B cell (primary cell): ENCODE measurements at regions of chr19 and their contacts with region 1.

Region 1: DNA sequence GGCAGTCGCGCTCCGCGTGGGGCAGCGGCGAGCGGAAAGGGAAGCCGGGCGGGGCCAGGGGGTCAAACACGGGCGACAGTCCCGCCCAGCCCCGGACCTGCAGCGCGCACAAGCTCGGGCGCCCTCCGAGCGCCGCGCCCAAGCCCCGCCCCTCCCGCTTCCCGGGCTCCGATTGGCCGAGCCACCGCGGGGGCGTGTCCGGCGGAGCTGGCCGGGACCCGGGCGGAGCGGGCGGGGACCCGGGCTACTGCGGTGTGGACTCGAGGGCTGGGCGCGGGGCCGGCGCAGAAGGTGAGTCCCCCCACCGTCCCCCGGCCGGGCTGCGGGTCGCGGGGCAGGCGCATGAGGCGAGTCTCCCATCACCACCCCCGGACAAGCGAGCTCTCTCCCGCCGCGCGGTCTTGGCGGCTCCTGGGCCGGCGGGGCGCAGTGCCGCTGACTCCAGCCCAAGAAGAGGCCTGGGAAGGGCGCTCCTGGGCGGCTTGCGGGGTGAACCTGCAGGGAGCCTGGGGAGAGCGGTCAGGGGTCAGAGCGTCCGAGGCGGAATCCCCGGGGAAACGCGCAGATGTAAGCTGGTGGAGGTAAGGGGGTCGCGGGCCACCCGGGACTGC is at the start of gene PLEKHF1:
- DNase-seq: peak; percentile 87
- ATAC-seq: peak; percentile 97
- H3K4me3 ChIP-seq: peak within 1 kb of the TSS; percentile 18 to 87 (median 75)
- H3K4me3 Mint-ChIP-seq: peak within 1 kb of the TSS; percentile 87
- H3K27ac ChIP-seq: peak within 1 kb of the TSS; percentile 18 to 79
- H3K27ac Mint-ChIP-seq: peak within 1 kb of the TSS; percentile 80
- H3K4me1 ChIP-seq: peaks cover 31 to 42% of the 10 kb centered on the region in 2 donors
- H3K4me1 Mint-ChIP-seq: peaks cover 32% of the 10 kb centered on the region
- H3K27me3 ChIP-seq: no peaks in the 10 kb centered on the region
- H3K27me3 Mint-ChIP-seq: no peaks in the 10 kb centered on the region
- CTCF ChIP-seq: no peak
- total RNA-seq, gene PLEKHF1: 5.5 and 6.4 TPM in 2 replicates

Region 2: GRCh38 chr19:29680447-29680846 is 15.1 kb after region 1 on chr19:
- CTCF ChIA-PET with region 1: interaction called, 5 read pairs
- POLR2A ChIA-PET with region 1: no interaction called
- intact Hi-C with region 1: loop called (anchors 2 kb)
- DNase-seq: peak; percentile 76
- ATAC-seq: peak; percentile 90
- H3K4me3 ChIP-seq: peak overlapping the region in 2 of 5 experiments; percentile 9 to 15
- H3K4me3 Mint-ChIP-seq: peak overlapping the region; percentile 70
- H3K27ac ChIP-seq: peak overlapping the region; percentile 56 to 63
- H3K27ac Mint-ChIP-seq: peak overlapping the region; percentile 79
- H3K4me1 ChIP-seq: peaks cover 30 to 45% of the 10 kb centered on the region in 2 donors
- H3K4me1 Mint-ChIP-seq: peaks cover 33% of the 10 kb centered on the region
- H3K27me3 ChIP-seq: no peaks in the 10 kb centered on the region
- H3K27me3 Mint-ChIP-seq: no peaks in the 10 kb centered on the region
- CTCF ChIP-seq: no peak

Region 3: DNA sequence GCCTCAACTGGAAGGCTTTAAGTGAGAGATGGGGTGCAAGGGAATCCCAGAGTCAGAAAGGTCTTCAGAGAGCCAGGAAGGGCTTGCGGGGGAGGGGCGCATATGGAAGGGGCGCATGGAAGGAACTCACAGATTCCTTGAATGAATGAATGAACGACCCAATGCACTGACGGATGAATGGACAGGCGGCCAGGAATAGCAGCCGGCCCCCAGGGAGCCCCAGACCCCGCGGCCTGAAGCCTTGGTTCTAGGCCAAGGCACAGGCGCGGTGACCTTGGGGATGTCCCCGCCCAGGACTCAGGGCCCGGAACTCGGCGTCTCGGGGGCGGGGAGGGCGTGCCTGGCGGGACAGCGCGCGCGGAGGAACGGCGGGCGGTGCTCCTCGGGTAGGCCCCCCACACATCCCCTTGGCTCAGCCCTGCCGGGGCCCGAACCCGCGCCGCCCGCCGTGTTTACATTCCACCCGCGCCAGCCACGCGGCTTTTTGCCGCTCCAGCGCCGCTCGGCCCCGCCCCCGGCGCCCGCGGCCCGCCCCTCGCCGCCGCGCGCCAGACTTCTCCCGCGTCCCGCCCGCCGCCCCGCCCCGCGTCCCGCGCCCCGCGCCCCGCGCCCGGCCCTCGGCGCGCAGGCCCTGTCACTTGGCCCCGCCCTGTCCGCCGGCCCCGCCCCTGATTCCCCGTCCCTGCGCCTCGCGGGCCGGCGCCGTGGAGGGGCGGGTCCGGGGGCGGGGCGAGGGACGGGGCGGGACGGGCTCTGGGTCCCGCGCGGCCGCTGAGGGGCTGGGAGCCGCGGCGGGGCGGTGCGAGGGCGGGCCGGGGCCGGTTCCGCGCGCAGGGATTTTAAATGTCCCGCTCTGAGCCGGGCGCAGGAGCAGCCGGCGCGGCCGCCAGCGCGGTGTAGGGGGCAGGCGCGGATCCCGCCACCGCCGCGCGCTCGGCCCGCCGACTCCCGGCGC is 146.1 kb after region 1 on chr19 and contains the start of gene CCNE1:
- CTCF ChIA-PET with region 1: no interaction called
- POLR2A ChIA-PET with region 1: no interaction called
- intact Hi-C with region 1: loop called (anchors 10 kb)
- DNase-seq: peak; percentile 92
- ATAC-seq: peak; percentile 94
- H3K4me3 ChIP-seq: peak within 1 kb of the TSS in 4 of 5 experiments; percentile 42 to 67 (median 58)
- H3K4me3 Mint-ChIP-seq: peak within 1 kb of the TSS; percentile 92
- H3K27ac ChIP-seq: peak within 1 kb of the TSS; percentile 41 to 76
- H3K27ac Mint-ChIP-seq: peak within 1 kb of the TSS; percentile 84
- H3K4me1 ChIP-seq: peaks cover 8 to 25% of the 10 kb centered on the region in 2 donors
- H3K4me1 Mint-ChIP-seq: peaks cover 15% of the 10 kb centered on the region
- H3K27me3 ChIP-seq: peaks cover 0 to 8% (median 0%) of the 10 kb centered on the region in 4 experiments
- H3K27me3 Mint-ChIP-seq: no peaks in the 10 kb centered on the region
- CTCF ChIP-seq: no peak
- total RNA-seq, gene CCNE1: 2.5 and 3.1 TPM in 2 replicates